CD4-positive, alpha-beta T cell (primary cell): ENCODE measurements at regions of chr5 and their contacts with region 1.

Region 1: GRCh38 chr5:96868603-96869371 is 7.5 kb upstream of the ERAP2 start:
- DNase-seq: peak in 6 of 14 experiments; percentile 18 to 81 (median 52)
- ATAC-seq: peak; percentile 99
- H3K4me3 ChIP-seq: no peak overlapping the region
- H3K4me3 Mint-ChIP-seq: no peak overlapping the region
- H3K27ac ChIP-seq: no peak overlapping the region
- H3K27ac Mint-ChIP-seq: peak overlapping the region; percentile 22
- H3K4me1 ChIP-seq: peaks cover 21% of the 10 kb centered on the region
- H3K4me1 Mint-ChIP-seq: peaks cover 45% of the 10 kb centered on the region
- H3K27me3 ChIP-seq: no peaks in the 10 kb centered on the region
- H3K27me3 Mint-ChIP-seq: no peaks in the 10 kb centered on the region
- CTCF ChIP-seq: peak; percentile 95

Region 2: DNA sequence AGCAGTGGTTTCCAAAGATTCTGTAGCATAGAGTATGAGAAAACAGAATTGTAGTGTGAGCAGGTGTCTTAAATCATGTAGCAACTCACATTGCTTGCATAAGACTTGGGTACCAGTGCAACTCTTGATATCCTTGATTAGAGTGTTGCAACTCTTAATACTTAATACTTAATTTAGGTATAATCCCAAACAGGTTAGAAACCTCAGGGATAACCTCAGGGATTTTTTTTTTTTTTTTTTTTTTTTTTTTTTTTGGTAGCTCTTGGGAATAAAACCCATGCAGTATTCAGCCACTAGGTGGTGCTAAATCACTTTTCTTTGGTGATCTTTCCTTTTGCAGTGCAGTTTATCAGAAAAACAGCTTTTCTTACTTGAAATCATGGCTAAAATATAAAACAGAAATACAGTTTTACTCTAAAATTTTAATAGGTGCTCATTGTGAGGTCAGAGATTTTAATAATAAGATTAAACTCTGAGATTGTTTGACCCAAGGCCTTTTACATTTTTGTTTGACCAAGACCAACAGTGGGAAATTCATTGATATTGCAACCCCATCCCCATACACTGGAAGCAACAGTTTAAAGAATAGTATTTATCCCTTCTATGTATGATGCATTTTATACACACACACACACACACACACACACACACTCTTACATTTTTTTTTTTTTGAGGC is 116.3 kb before region 1 on chr5:
- CTCF ChIA-PET with region 1: interaction called, 7 read pairs
- POLR2A ChIA-PET with region 1: interaction called, 3 read pairs
- intact Hi-C with region 1: loop called (anchors 2 to 10 kb)
- DNase-seq: peak in 6 of 14 experiments; percentile 17 to 82 (median 68)
- ATAC-seq: peak; percentile 67
- H3K4me3 ChIP-seq: no peak overlapping the region
- H3K4me3 Mint-ChIP-seq: no peak overlapping the region
- H3K27ac ChIP-seq: no peak overlapping the region
- H3K27ac Mint-ChIP-seq: no peak overlapping the region
- H3K4me1 ChIP-seq: no peaks in the 10 kb centered on the region
- H3K4me1 Mint-ChIP-seq: no peaks in the 10 kb centered on the region
- H3K27me3 ChIP-seq: no peaks in the 10 kb centered on the region
- H3K27me3 Mint-ChIP-seq: no peaks in the 10 kb centered on the region
- CTCF ChIP-seq: peak; percentile 83

Region 3: GRCh38 chr5:96885518-96886338 is 16.9 kb after region 1 on chr5:
- CTCF ChIA-PET with region 1: interaction called, 12 read pairs
- POLR2A ChIA-PET with region 1: interaction called, 6 read pairs
- intact Hi-C with region 1: no loop called
- DNase-seq: peak in 7 of 14 experiments; percentile 14 to 90 (median 45)
- ATAC-seq: peak; percentile 95
- H3K4me3 ChIP-seq: no peak overlapping the region
- H3K4me3 Mint-ChIP-seq: peak overlapping the region; percentile 59
- H3K27ac ChIP-seq: peak overlapping the region; percentile 44 to 82
- H3K27ac Mint-ChIP-seq: peak overlapping the region; percentile 94
- H3K4me1 ChIP-seq: peaks cover 55% of the 10 kb centered on the region
- H3K4me1 Mint-ChIP-seq: peaks cover 76% of the 10 kb centered on the region
- H3K27me3 ChIP-seq: no peaks in the 10 kb centered on the region
- H3K27me3 Mint-ChIP-seq: no peaks in the 10 kb centered on the region
- CTCF ChIP-seq: no peak

Region 4: GRCh38 chr5:96904054-96904931 is 35.5 kb after region 1 on chr5:
- CTCF ChIA-PET with region 1: interaction called, 10 read pairs
- POLR2A ChIA-PET with region 1: interaction called, 3 read pairs
- intact Hi-C with region 1: no loop called
- DNase-seq: no peak
- ATAC-seq: no peak
- H3K4me3 ChIP-seq: no peak overlapping the region
- H3K4me3 Mint-ChIP-seq: no peak overlapping the region
- H3K27ac ChIP-seq: no peak overlapping the region
- H3K27ac Mint-ChIP-seq: no peak overlapping the region
- H3K4me1 ChIP-seq: no peaks in the 10 kb centered on the region
- H3K4me1 Mint-ChIP-seq: peaks cover 12% of the 10 kb centered on the region
- H3K27me3 ChIP-seq: no peaks in the 10 kb centered on the region
- H3K27me3 Mint-ChIP-seq: no peaks in the 10 kb centered on the region
- CTCF ChIP-seq: no peak

Region 5: GRCh38 chr5:96997265-96997859 is 128.6 kb after region 1 on chr5:
- CTCF ChIA-PET with region 1: interaction called, 13 read pairs
- POLR2A ChIA-PET with region 1: interaction called, 8 read pairs
- intact Hi-C with region 1: no loop called
- DNase-seq: peak in 4 of 14 experiments; percentile 37 to 65 (median 52)
- ATAC-seq: peak; percentile 76
- H3K4me3 ChIP-seq: no peak overlapping the region
- H3K4me3 Mint-ChIP-seq: no peak overlapping the region
- H3K27ac ChIP-seq: no peak overlapping the region
- H3K27ac Mint-ChIP-seq: peak overlapping the region; percentile 59
- H3K4me1 ChIP-seq: no peaks in the 10 kb centered on the region
- H3K4me1 Mint-ChIP-seq: peaks cover 39% of the 10 kb centered on the region
- H3K27me3 ChIP-seq: no peaks in the 10 kb centered on the region
- H3K27me3 Mint-ChIP-seq: no peaks in the 10 kb centered on the region
- CTCF ChIP-seq: peak; percentile 57

Region 6: GRCh38 chr5:97142521-97143254 is 273.9 kb after region 1 on chr5 and contains the start of gene LIX1:
- CTCF ChIA-PET with region 1: no interaction called
- POLR2A ChIA-PET with region 1: no interaction called
- intact Hi-C with region 1: loop called in 1 of 2 experiments (anchors 5 kb)
- DNase-seq: peak in 7 of 14 experiments; percentile 1 to 49 (median 18)
- ATAC-seq: peak; percentile 68
- H3K4me3 ChIP-seq: no peak within 1 kb of the TSS
- H3K4me3 Mint-ChIP-seq: no peak within 1 kb of the TSS
- H3K27ac ChIP-seq: no peak within 1 kb of the TSS
- H3K27ac Mint-ChIP-seq: no peak within 1 kb of the TSS
- H3K4me1 ChIP-seq: no peaks in the 10 kb centered on the region
- H3K4me1 Mint-ChIP-seq: no peaks in the 10 kb centered on the region
- H3K27me3 ChIP-seq: no peaks in the 10 kb centered on the region
- H3K27me3 Mint-ChIP-seq: peaks cover 14% of the 10 kb centered on the region
- CTCF ChIP-seq: peak; percentile 27
- total RNA-seq, gene LIX1: not detected